Heart right ventricle (tissue), 16 donors: ENCODE measurements at regions of chr2 and their contacts with region 1.

Region 1: DNA sequence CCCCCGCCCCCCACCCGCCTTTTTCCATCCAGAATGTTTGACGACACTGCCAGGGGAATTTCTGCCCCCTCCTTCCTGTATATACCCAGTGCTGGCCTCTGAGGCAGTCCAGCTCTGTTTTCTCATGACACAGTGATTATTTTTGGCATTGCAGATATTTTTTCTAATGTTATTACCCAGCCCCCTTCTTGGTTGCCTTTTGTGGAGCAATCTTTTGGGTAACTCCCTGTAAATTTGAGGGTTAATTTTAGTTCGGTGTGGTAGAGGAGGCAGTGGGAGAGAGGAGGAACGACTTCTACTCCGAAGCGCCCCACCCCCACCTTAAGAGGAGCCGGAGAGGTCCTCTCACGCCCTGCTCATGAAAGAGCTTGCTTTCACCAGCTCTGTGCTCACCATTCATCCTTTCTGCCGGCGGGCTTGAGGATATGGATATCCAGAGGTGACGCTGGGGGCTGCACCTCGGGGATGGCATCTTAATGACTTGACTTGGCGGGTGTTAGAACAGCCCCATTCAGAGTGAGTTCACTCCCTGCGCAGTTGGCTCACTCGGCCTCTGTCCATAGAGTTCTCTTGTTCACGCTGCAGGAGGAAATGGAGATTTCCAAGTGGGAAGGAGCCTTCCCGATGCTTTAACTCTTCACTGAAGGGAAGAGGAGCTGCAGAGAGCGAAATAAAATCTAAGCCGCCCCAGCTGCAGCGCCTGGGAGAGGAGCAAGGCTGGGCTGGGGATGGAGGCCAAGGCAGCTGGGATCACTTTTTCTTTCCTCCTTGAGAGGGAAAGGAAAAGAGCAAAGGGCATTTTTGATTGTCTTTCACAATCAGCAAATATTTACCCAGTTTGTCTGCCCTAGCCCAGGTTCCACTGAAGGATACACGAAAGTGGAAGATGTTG is 38.4 kb downstream of the EPAS1 start:
- DNase-seq: peak in 1 of 2 donors; percentile 62
- ATAC-seq: peak in 7 of 8 donors; percentile 16 to 55 (median 39)
- H3K4me3 ChIP-seq: peak overlapping the region in 8 of 10 donors; percentile 8 to 49 (median 42)
- H3K27ac ChIP-seq: peak overlapping the region; percentile 41 to 91 (median 85)
- H3K4me1 ChIP-seq: peaks cover 65 to 100% (median 98%) of the 10 kb centered on the region in 9 donors
- H3K27me3 ChIP-seq: no peaks in the 10 kb centered on the region
- CTCF ChIP-seq: no peak

Region 2: DNA sequence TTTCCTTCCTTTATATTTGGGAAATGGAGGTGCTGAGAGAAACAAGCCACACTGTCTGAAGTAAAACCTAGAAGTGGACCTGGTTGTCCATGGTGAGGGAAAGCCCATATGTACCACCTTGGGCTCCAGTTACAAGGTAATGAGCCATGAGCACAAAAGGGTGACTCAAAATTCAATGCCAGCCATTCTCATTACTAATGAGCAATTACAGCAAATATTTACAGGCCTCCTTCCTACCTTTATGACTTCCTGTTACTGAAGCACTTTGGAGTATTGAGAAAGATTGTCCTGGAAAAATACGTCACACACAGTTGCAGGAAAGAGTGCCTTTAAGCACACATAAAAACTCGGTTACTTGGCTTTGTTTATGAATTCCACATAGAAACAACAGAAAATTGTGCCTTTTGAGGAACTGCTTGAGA is 29.3 kb before region 1 on chr2:
- intact Hi-C with region 1: loop called in 4 of 10 experiments (anchors 2 to 5 kb)
- DNase-seq: no peak
- ATAC-seq: peak in 5 of 8 donors; percentile 11 to 51 (median 27)
- H3K4me3 ChIP-seq: peak overlapping the region in 2 of 10 donors; percentile 20 to 24
- H3K27ac ChIP-seq: peak overlapping the region; percentile 69 to 99 (median 81)
- H3K4me1 ChIP-seq: peaks cover 43 to 99% (median 96%) of the 10 kb centered on the region in 9 donors
- H3K27me3 ChIP-seq: no peaks in the 10 kb centered on the region
- CTCF ChIP-seq: no peak

Region 3: GRCh38 chr2:47897883-47898731 is 1562.5 kb after region 1 on chr2:
- intact Hi-C with region 1: no loop called
- DNase-seq: no peak
- ATAC-seq: no peak
- H3K4me3 ChIP-seq: no peak overlapping the region
- H3K27ac ChIP-seq: peak overlapping the region in 1 of 10 donors; percentile 50
- H3K4me1 ChIP-seq: peaks cover 4 to 96% (median 84%) of the 10 kb centered on the region in 9 donors
- H3K27me3 ChIP-seq: no peaks in the 10 kb centered on the region
- CTCF ChIP-seq: no peak